Dendritic cell treated with granulocyte-macrophage colony-stimulating factor and Interleukin-4, amounts not matched to agents 40 ng/mL and 50 ng/mL, for 4 days (primary cell): ENCODE measurements at regions of chr6 and their contacts with region 1.

Region 1: GRCh38 chr6:158999666-159000403 is at the start of gene RSPH3:
- H3K4me3 Mint-ChIP-seq: peak within 1 kb of the TSS; percentile 99
- H3K27ac Mint-ChIP-seq: peak within 1 kb of the TSS; percentile 99
- H3K4me1 Mint-ChIP-seq: peaks cover 54% of the 10 kb centered on the region
- H3K27me3 Mint-ChIP-seq: no peaks in the 10 kb centered on the region

Region 2: DNA sequence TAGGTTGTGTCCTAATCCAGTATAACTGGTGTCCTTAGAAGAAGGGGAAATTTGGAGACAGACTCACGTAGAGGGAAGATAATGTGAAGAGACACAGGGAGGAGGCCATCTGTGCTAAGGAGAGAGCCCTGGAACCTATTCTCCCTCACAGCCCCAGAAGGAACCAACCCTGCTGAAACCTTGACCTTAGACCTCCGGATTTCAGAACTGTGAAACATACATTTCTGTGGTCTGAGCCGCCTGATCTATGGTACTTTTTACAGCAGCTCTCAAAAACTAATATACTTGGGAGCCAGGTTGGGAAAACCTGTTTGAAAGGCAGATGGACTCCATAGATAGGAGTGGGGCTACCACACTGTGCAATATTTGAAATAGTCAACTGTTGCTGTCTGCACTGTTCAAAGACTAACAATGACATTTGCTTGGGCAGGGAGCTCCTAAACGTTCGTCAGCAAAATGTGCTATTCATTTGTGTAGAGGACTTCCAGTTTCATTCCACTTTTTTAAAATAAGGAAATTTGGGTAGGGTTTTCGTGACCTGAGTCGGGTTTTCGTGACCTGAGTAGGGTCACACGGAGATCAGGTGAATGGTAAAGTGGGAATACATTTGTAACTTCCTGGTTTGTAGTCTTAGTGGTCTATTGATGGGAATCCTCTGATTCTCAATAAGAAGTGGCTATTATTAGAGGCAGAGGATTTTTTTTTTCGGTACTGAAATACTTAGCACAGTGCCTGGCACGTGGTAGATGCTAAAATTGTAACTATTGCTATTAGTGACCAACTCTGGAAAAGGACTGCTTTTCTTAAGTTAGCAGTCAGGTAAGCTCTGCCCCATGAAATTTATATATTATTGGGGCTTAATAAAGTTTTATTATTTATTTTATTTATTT is 33.6 kb after region 1 on chr6:
- intact Hi-C with region 1: loop called (anchors 5 kb)
- H3K4me3 Mint-ChIP-seq: no peak overlapping the region
- H3K27ac Mint-ChIP-seq: peak overlapping the region; percentile 79
- H3K4me1 Mint-ChIP-seq: peaks cover 64% of the 10 kb centered on the region
- H3K27me3 Mint-ChIP-seq: no peaks in the 10 kb centered on the region